ENCODE measurements at regions of chr17 and their contacts with region 1.

Region 1: GRCh38 chr17:31373150-31374093 is 18.1 kb upstream of the RAB11FIP4 start:
- DNase-seq: peak; percentile 75
- ATAC-seq: peak; percentile 67
- H3K4me3 ChIP-seq: no peak overlapping the region
- H3K4me3 Mint-ChIP-seq: no peak overlapping the region
- H3K27ac ChIP-seq: no peak overlapping the region
- H3K27ac Mint-ChIP-seq: peak overlapping the region; percentile 46
- H3K4me1 ChIP-seq: peaks cover 6 to 9% of the 10 kb centered on the region in 2 donors
- H3K4me1 Mint-ChIP-seq: peaks cover 31% of the 10 kb centered on the region
- H3K27me3 ChIP-seq: no peaks in the 10 kb centered on the region
- H3K27me3 Mint-ChIP-seq: no peaks in the 10 kb centered on the region
- CTCF ChIP-seq: peak; percentile 81

Region 2: GRCh38 chr17:31008374-31009041 is 364.9 kb before region 1 on chr17:
- CTCF ChIA-PET with region 1: interaction called, 11 read pairs
- POLR2A ChIA-PET with region 1: no interaction called
- intact Hi-C with region 1: loop called (anchors 1 kb)
- DNase-seq: peak; percentile 75
- ATAC-seq: peak; percentile 79
- H3K4me3 ChIP-seq: peak overlapping the region; percentile 47 to 86 (median 69)
- H3K4me3 Mint-ChIP-seq: peak overlapping the region; percentile 96
- H3K27ac ChIP-seq: peak overlapping the region; percentile 41 to 77
- H3K27ac Mint-ChIP-seq: peak overlapping the region; percentile 95
- H3K4me1 ChIP-seq: peaks cover 3 to 12% of the 10 kb centered on the region in 2 donors
- H3K4me1 Mint-ChIP-seq: peaks cover 24% of the 10 kb centered on the region
- H3K27me3 ChIP-seq: no peaks in the 10 kb centered on the region
- H3K27me3 Mint-ChIP-seq: no peaks in the 10 kb centered on the region
- CTCF ChIP-seq: no peak

Region 3: GRCh38 chr17:31094600-31095238 is 278.7 kb before region 1 on chr17 and contains the start of gene NF1:
- CTCF ChIA-PET with region 1: no interaction called
- POLR2A ChIA-PET with region 1: no interaction called
- intact Hi-C with region 1: loop called (anchors 10 kb)
- DNase-seq: peak; percentile 93
- ATAC-seq: peak; percentile 79
- H3K4me3 ChIP-seq: peak within 1 kb of the TSS; percentile 67 to 90 (median 82)
- H3K4me3 Mint-ChIP-seq: peak within 1 kb of the TSS; percentile 97
- H3K27ac ChIP-seq: peak within 1 kb of the TSS; percentile 75 to 90
- H3K27ac Mint-ChIP-seq: peak within 1 kb of the TSS; percentile 93
- H3K4me1 ChIP-seq: peaks cover 5 to 14% of the 10 kb centered on the region in 2 donors
- H3K4me1 Mint-ChIP-seq: peaks cover 11% of the 10 kb centered on the region
- H3K27me3 ChIP-seq: no peaks in the 10 kb centered on the region
- H3K27me3 Mint-ChIP-seq: no peaks in the 10 kb centered on the region
- CTCF ChIP-seq: no peak
- total RNA-seq, gene NF1: 27.7 and 31.9 TPM in 2 replicates

Region 4: GRCh38 chr17:31216053-31216751 is 157.2 kb before region 1 on chr17:
- CTCF ChIA-PET with region 1: interaction called, 82 read pairs
- POLR2A ChIA-PET with region 1: no interaction called
- intact Hi-C with region 1: no loop called
- DNase-seq: peak; percentile 63
- ATAC-seq: no peak
- H3K4me3 ChIP-seq: no peak overlapping the region
- H3K4me3 Mint-ChIP-seq: no peak overlapping the region
- H3K27ac ChIP-seq: no peak overlapping the region
- H3K27ac Mint-ChIP-seq: no peak overlapping the region
- H3K4me1 ChIP-seq: no peaks in the 10 kb centered on the region
- H3K4me1 Mint-ChIP-seq: no peaks in the 10 kb centered on the region
- H3K27me3 ChIP-seq: no peaks in the 10 kb centered on the region
- H3K27me3 Mint-ChIP-seq: no peaks in the 10 kb centered on the region
- CTCF ChIP-seq: peak; percentile 82

Region 5: DNA sequence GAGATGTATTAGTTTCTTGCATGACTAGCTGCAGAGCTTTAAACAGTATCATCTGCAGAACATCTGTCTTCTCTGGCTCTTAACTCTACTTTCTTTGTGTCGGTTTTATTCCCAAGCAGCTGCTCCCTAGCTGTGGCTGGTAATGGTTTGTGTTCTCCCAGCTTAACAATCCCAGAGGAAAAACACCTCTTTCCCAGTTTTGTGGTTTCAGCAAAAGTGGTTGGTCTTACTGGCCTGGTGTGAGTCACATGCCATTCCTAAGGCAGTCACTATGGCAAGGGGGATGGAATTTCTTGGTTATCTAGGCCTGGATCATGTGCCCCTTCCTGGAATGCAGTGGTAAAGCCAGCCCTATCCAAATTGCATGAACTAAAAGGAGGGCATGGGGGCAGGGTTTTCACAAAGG is 103.8 kb before region 1 on chr17:
- CTCF ChIA-PET with region 1: interaction called, 125 read pairs
- POLR2A ChIA-PET with region 1: no interaction called
- intact Hi-C with region 1: loop called (anchors 1 kb)
- DNase-seq: no peak
- ATAC-seq: no peak
- H3K4me3 ChIP-seq: no peak overlapping the region
- H3K4me3 Mint-ChIP-seq: no peak overlapping the region
- H3K27ac ChIP-seq: no peak overlapping the region
- H3K27ac Mint-ChIP-seq: no peak overlapping the region
- H3K4me1 ChIP-seq: no peaks in the 10 kb centered on the region
- H3K4me1 Mint-ChIP-seq: no peaks in the 10 kb centered on the region
- H3K27me3 ChIP-seq: no peaks in the 10 kb centered on the region
- H3K27me3 Mint-ChIP-seq: no peaks in the 10 kb centered on the region
- CTCF ChIP-seq: no peak

Region 6: DNA sequence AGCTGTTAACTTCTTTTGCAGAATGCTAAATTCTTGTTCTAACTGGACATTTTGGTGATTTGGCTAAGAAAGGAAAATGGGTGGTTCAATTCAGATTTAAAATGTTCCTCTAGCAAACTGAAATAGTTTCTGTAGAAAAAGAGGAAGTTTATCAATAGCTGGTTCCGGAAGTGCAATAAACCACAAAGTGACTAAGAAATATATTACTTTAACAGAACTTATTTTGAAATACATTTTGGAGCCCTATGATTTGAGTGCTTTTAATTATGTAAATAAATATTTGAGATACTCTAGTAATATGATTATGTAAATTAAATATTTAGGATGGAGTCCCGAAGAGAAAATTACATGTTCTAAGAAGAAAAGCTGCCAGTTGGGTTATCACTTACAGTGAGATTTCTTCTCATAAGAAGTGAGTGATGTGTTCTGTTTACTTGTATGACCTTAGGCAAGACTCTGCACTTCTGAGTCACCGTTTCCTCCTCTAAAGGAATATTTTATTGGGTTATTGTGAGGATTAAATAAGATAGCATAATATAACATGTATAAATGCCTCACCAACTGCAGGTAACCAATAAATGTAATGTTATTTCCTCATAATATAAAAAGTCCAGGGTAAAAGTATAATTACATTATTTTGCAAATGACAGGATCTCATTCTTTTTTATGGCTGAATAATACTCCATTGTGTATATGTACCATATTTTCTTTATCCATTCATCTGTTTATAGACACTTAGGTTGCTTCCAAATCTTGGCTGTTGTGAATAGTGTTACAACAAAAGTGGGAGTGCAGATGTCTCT is 59.2 kb before region 1 on chr17 and contains the start of gene EVI2B:
- CTCF ChIA-PET with region 1: interaction called, 22 read pairs
- POLR2A ChIA-PET with region 1: no interaction called
- intact Hi-C with region 1: loop called (anchors 2 kb)
- DNase-seq: peak; percentile 76
- ATAC-seq: peak; percentile 31
- H3K4me3 ChIP-seq: peak within 1 kb of the TSS; percentile 58 to 98 (median 80)
- H3K4me3 Mint-ChIP-seq: peak within 1 kb of the TSS; percentile 86
- H3K27ac ChIP-seq: peak within 1 kb of the TSS; percentile 54 to 70
- H3K27ac Mint-ChIP-seq: peak within 1 kb of the TSS; percentile 91
- H3K4me1 ChIP-seq: peaks cover 27 to 45% of the 10 kb centered on the region in 2 donors
- H3K4me1 Mint-ChIP-seq: peaks cover 61% of the 10 kb centered on the region
- H3K27me3 ChIP-seq: no peaks in the 10 kb centered on the region
- H3K27me3 Mint-ChIP-seq: no peaks in the 10 kb centered on the region
- CTCF ChIP-seq: no peak
- total RNA-seq, gene EVI2B: 125 and 132 TPM in 2 replicates

Region 7: DNA sequence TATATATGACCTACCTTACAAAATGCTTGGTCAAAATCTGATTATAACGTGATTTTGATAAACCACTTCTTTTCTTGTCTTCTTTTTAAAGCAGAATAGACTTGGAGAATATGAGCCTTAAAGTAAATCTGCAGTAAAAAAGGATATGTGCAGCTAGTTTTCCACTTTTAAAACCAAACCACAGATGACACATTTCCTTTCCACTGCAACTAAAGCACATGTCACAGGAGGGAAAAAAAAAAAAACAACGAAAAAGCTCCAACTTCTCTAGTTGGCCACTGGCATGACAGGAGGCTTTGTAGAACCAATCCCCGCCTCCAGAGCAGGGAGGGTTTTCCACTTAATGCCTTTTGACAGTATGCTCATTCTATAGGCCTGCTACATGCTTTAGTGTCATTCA is 51.9 kb before region 1 on chr17 and contains the start of gene EVI2A:
- CTCF ChIA-PET with region 1: interaction called, 22 read pairs
- POLR2A ChIA-PET with region 1: no interaction called
- intact Hi-C with region 1: loop called (anchors 2 kb)
- DNase-seq: peak; percentile 81
- ATAC-seq: peak; percentile 71
- H3K4me3 ChIP-seq: peak within 1 kb of the TSS; percentile 40 to 98 (median 69)
- H3K4me3 Mint-ChIP-seq: peak within 1 kb of the TSS; percentile 87
- H3K27ac ChIP-seq: peak within 1 kb of the TSS; percentile 40 to 91
- H3K27ac Mint-ChIP-seq: peak within 1 kb of the TSS; percentile 69
- H3K4me1 ChIP-seq: peaks cover 19 to 32% of the 10 kb centered on the region in 2 donors
- H3K4me1 Mint-ChIP-seq: peaks cover 37% of the 10 kb centered on the region
- H3K27me3 ChIP-seq: no peaks in the 10 kb centered on the region
- H3K27me3 Mint-ChIP-seq: no peaks in the 10 kb centered on the region
- CTCF ChIP-seq: no peak
- total RNA-seq, gene EVI2A: 47.3 and 49.3 TPM in 2 replicates